ENCODE measurements at regions of chr4 and their contacts with region 1.

Region 1: GRCh38 chr4:123986268-123986798 is 589.7 kb downstream of the SPRY1 start:
- DNase-seq: peak; percentile 99
- H3K4me3 ChIP-seq: no peak overlapping the region
- H3K27ac ChIP-seq: peak overlapping the region; percentile 98
- H3K4me1 ChIP-seq: peaks cover 41% of the 10 kb centered on the region
- H3K27me3 ChIP-seq: no peaks in the 10 kb centered on the region
- CTCF ChIP-seq: no peak
- POLR2A ChIP-seq: no peak

Region 2: GRCh38 chr4:122814426-122814825 is 1171.9 kb before region 1 on chr4:
- CTCF ChIA-PET with region 1: no interaction called
- POLR2A ChIA-PET with region 1: no interaction called
- dilution Hi-C with region 1: no loop called
- intact Hi-C with region 1: no loop called
- DNase-seq: no peak
- H3K4me3 ChIP-seq: no peak overlapping the region
- H3K27ac ChIP-seq: no peak overlapping the region
- H3K4me1 ChIP-seq: peaks cover 4% of the 10 kb centered on the region
- H3K27me3 ChIP-seq: no peaks in the 10 kb centered on the region
- CTCF ChIP-seq: no peak
- POLR2A ChIP-seq: no peak

Region 3: GRCh38 chr4:123361195-123361861 is 625.0 kb before region 1 on chr4:
- CTCF ChIA-PET with region 1: no interaction called
- POLR2A ChIA-PET with region 1: no interaction called
- dilution Hi-C with region 1: no loop called
- intact Hi-C with region 1: loop called (anchors 1 kb)
- DNase-seq: peak; percentile 93
- H3K4me3 ChIP-seq: no peak overlapping the region
- H3K27ac ChIP-seq: peak overlapping the region; percentile 98
- H3K4me1 ChIP-seq: peaks cover 24% of the 10 kb centered on the region
- H3K27me3 ChIP-seq: no peaks in the 10 kb centered on the region
- CTCF ChIP-seq: no peak
- POLR2A ChIP-seq: no peak

Region 4: DNA sequence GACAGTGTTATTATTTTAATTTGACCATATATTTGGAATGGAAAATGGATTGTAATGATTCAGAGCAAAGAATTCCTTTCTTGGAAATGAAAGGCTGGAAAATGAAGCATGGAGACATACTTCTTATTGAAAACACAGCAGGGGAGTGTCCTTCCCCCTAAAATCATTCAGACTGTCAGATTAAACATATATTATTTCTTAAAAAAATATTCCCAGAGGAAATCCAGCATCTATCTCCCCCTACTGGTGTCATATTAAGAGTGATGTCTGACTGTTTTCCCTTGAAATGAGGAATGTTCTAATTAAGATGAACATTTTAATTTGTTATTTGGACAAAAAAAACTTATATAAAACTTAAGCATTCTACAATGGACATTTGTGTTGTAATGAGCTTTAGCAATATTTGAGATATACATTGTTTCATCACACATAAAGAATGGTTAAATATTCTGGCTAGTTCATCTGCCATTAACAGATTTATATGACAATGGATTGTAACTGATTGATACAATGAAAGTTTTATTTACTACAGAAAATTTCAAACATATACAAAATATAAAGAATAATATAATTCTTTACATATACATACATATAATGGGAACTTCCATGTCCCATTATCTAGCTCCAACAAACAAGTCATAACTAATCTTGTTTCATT is 325.1 kb before region 1 on chr4:
- CTCF ChIA-PET with region 1: no interaction called
- POLR2A ChIA-PET with region 1: no interaction called
- dilution Hi-C with region 1: no loop called
- intact Hi-C with region 1: loop called (anchors 5 kb)
- DNase-seq: peak; percentile 49
- H3K4me3 ChIP-seq: no peak overlapping the region
- H3K27ac ChIP-seq: no peak overlapping the region
- H3K4me1 ChIP-seq: no peaks in the 10 kb centered on the region
- H3K27me3 ChIP-seq: no peaks in the 10 kb centered on the region
- CTCF ChIP-seq: peak; percentile 27 to 37
- POLR2A ChIP-seq: no peak

Region 5: DNA sequence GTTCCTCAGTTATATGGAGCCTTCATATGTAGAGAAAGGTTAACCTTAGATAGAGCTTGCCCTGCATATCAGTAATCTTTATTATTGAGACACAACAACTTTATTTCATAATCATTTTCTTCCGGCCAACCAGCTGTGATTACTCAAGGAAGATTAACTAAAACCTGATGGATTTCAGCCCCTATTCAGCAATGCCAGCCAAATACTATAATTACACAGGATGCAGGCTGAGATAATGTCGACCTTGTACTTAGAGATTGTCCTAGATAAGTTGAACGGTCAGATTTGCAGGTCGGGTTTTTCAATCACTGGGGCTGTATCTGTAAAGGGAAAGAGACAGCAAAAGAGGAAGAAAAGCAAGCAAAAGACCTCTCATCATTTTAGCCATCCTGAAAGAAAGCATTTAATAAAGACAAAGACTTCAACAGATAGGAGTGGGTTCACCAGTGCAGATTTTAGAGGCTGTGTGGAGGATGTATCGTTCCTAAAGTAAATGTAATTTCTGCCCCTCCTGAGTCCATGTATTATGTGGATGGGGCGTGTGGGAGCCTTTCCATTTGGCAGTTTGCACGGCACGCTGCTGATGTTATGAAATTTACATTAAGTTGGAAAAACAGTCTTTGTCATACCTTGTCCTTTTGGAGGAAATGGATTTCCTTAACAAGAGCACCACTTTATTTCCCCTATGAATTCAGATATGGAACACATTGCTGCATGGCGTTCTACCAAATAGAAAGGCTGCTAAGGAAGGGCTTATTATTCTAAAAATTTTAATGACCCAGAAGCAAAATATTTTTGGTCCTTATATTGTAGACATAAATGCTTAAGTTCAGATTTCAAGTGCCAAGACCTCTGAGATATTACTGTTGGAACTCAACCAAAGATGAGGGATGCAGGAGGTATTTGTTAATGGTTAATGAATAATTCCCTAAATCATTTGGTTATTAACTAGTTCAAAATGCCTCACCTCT is 93.0 kb before region 1 on chr4:
- CTCF ChIA-PET with region 1: interaction called, 4 read pairs
- POLR2A ChIA-PET with region 1: no interaction called
- dilution Hi-C with region 1: no loop called
- intact Hi-C with region 1: loop called (anchors 1 kb)
- DNase-seq: peak; percentile 87
- H3K4me3 ChIP-seq: peak overlapping the region in 1 of 3 experiments; percentile 26
- H3K27ac ChIP-seq: peak overlapping the region; percentile 96
- H3K4me1 ChIP-seq: peaks cover 69% of the 10 kb centered on the region
- H3K27me3 ChIP-seq: no peaks in the 10 kb centered on the region
- CTCF ChIP-seq: no peak
- POLR2A ChIP-seq: peak; percentile 43

Region 6: DNA sequence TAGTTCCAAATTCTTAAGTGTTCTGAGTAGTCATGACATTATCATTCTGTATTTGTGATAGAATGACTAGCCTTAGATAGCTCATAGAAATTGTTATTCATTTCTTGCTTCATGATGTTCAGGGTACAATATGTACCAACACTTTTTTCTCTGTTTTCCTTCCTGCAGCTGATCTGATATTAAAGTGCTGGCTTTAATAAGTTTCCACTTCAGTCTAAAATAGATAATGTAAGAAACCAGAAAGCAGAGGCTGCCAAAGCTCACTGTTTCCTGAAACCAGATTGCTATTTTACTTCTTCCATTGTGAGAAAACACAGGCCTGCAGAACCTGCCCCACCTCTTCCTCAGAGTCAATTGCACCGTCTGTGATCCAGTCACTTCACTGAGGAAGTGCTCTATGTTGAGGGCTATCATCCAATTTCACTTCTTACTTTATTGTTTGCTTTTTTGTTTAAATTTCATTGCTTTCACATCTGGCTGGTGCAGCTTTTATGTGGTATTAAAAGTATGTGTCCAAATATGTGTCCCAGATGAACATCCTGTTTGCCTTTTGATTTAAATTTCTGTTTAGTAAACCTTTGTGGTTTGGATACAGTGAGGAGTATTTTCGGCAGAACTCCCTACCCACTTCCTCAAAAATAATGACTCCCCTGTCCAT is 74.1 kb after region 1 on chr4:
- CTCF ChIA-PET with region 1: no interaction called
- POLR2A ChIA-PET with region 1: no interaction called
- dilution Hi-C with region 1: no loop called
- intact Hi-C with region 1: loop called (anchors 1 kb)
- DNase-seq: peak; percentile 90
- H3K4me3 ChIP-seq: peak overlapping the region in 1 of 3 experiments; percentile 3
- H3K27ac ChIP-seq: peak overlapping the region; percentile 39
- H3K4me1 ChIP-seq: peaks cover 19% of the 10 kb centered on the region
- H3K27me3 ChIP-seq: no peaks in the 10 kb centered on the region
- CTCF ChIP-seq: no peak
- POLR2A ChIP-seq: no peak

Region 7: DNA sequence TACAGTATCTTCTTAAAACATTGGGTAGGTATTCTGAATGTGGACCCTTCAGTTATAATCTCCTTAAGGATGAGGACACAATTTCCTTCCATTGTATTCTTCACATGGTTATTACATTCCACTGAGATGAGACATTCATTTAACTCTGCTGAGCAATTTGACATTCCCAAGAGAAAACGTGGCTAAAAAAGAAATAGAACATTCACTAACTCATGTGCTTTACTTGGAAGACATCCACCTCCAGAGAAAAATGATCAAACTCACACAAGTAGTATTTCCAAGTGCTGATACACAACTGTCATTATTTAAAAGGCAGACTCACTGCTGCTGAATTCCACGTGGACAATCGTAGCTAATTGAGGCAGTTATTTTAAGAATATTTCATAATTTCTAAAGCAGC is 954.1 kb after region 1 on chr4:
- CTCF ChIA-PET with region 1: no interaction called
- POLR2A ChIA-PET with region 1: no interaction called
- dilution Hi-C with region 1: no loop called
- intact Hi-C with region 1: loop called (anchors 5 kb)
- DNase-seq: peak; percentile 97
- H3K4me3 ChIP-seq: no peak overlapping the region
- H3K27ac ChIP-seq: peak overlapping the region; percentile 98
- H3K4me1 ChIP-seq: peaks cover 38% of the 10 kb centered on the region
- H3K27me3 ChIP-seq: no peaks in the 10 kb centered on the region
- CTCF ChIP-seq: no peak
- POLR2A ChIP-seq: peak; percentile 29

Measured in endothelial cell of umbilical vein (primary cell).